MCF 10A (cell line): ENCODE measurements at regions of chr2 and their contacts with region 1.

Region 1: DNA sequence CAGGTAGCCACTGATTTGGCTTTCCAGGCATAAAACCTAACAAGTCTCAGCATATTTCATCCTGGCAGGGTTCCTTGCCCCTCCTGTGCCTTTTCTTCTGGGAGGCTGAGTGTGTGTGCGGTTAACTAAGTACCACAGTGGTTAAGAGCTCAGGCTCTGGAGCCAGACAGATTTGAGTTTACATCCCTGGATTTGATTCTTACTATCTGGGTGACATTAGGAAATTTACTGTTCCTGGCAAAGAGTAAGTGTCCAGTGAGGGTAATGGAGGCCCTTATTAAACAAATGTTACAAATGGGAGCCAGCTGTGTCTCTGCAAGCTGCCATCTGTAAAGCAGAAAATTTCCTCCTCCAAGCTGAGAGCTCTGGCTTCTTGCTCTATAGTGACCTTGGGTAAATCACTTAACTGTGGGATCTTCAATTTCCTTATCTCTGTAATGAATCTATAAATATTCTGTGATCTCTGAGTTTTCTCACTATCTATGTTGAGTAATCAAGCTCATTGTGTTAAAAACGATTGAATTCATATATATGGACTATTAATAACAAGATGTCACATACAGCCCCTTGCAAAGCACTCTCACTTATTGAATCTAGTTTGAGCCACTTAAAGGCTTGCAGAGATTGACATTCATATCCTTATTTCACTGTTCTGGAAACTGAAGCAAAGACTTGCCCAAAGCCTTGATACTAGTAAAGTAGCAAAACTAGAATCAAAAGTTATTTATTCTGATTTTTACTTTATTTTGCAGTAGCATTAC is 6.5 kb upstream of the COBLL1 start:
- DNase-seq: peak; percentile 73
- H3K4me3 Mint-ChIP-seq: no peak overlapping the region
- H3K27ac Mint-ChIP-seq: peak overlapping the region; percentile 57
- H3K4me1 Mint-ChIP-seq: peaks cover 21% of the 10 kb centered on the region
- H3K27me3 Mint-ChIP-seq: no peaks in the 10 kb centered on the region
- CTCF ChIP-seq: no peak

Region 2: DNA sequence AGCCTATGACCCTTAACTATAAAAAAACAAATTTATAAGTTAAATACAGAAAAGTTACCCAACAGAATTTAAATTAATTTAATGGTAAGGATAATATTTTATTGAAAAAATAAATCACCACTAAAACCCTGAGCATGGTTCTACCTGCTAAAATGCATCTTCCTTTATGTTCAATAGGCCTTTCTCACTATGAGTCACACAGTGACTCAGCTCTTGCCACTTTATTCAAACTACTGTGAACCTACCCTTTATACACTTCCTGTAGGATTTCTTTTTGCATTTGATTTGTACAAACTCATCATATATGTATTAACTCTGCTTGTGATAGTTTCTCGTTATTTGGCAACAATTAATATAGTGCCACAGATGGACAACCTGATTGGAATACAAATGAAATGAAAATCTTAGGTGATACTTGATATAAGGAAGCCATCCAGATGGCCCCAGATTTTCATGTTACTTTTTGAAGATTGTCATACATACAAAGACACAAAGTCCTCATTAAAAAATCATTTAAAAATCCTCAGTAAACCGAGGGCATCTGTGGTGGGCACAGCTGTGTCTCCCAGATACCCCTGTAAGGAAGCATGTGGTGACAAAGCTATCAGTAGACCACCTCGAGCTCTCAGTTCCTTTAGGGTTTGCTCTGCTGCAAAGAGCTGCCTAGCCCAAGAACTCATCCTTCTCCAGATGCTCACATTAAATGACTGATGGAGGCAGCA is 48.6 kb after region 1 on chr2:
- CTCF ChIA-PET with region 1: interaction called, 11 read pairs
- POLR2A ChIA-PET with region 1: interaction called, 13 read pairs
- intact Hi-C with region 1: no loop called
- DNase-seq: peak; percentile 75
- H3K4me3 Mint-ChIP-seq: no peak overlapping the region
- H3K27ac Mint-ChIP-seq: peak overlapping the region; percentile 85
- H3K4me1 Mint-ChIP-seq: peaks cover 15% of the 10 kb centered on the region
- H3K27me3 Mint-ChIP-seq: no peaks in the 10 kb centered on the region
- CTCF ChIP-seq: no peak

Region 3: GRCh38 chr2:164910101-164910899 is 62.1 kb after region 1 on chr2:
- CTCF ChIA-PET with region 1: interaction called, 24 read pairs
- POLR2A ChIA-PET with region 1: interaction called, 65 read pairs
- intact Hi-C with region 1: no loop called
- DNase-seq: peak; percentile 61
- H3K4me3 Mint-ChIP-seq: peak overlapping the region; percentile 11
- H3K27ac Mint-ChIP-seq: peak overlapping the region; percentile 84
- H3K4me1 Mint-ChIP-seq: peaks cover 16% of the 10 kb centered on the region
- H3K27me3 Mint-ChIP-seq: no peaks in the 10 kb centered on the region
- CTCF ChIP-seq: no peak

Region 4: GRCh38 chr2:165055082-165055851 is 207.1 kb after region 1 on chr2:
- CTCF ChIA-PET with region 1: no interaction called
- POLR2A ChIA-PET with region 1: no interaction called
- intact Hi-C with region 1: no loop called
- DNase-seq: no peak
- H3K4me3 Mint-ChIP-seq: no peak overlapping the region
- H3K27ac Mint-ChIP-seq: no peak overlapping the region
- H3K4me1 Mint-ChIP-seq: no peaks in the 10 kb centered on the region
- H3K27me3 Mint-ChIP-seq: peaks cover 63% of the 10 kb centered on the region
- CTCF ChIP-seq: no peak

Region 5: GRCh38 chr2:165067958-165068757 is 220.0 kb after region 1 on chr2:
- CTCF ChIA-PET with region 1: no interaction called
- POLR2A ChIA-PET with region 1: no interaction called
- intact Hi-C with region 1: no loop called
- DNase-seq: no peak
- H3K4me3 Mint-ChIP-seq: no peak overlapping the region
- H3K27ac Mint-ChIP-seq: no peak overlapping the region
- H3K4me1 Mint-ChIP-seq: no peaks in the 10 kb centered on the region
- H3K27me3 Mint-ChIP-seq: peaks cover 61% of the 10 kb centered on the region
- CTCF ChIP-seq: no peak